IMR-90 (cell line): ENCODE measurements at regions of chr18 and their contacts with region 1.

Region 1: GRCh38 chr18:67670024-67670543 is 153.6 kb upstream of the DSEL start:
- DNase-seq: peak; percentile 98
- ATAC-seq: peak; percentile 87
- H3K4me3 ChIP-seq: no peak overlapping the region
- H3K27ac ChIP-seq: peak overlapping the region; percentile 100
- H3K4me1 ChIP-seq: peaks cover 12% of the 10 kb centered on the region
- H3K27me3 ChIP-seq: no peaks in the 10 kb centered on the region
- CTCF ChIP-seq: no peak
- POLR2A ChIP-seq: no peak
- RAD21 ChIP-seq: 0 out of 2 replicates have a peak, but pooled peaks have one; percentile 2

Region 2: DNA sequence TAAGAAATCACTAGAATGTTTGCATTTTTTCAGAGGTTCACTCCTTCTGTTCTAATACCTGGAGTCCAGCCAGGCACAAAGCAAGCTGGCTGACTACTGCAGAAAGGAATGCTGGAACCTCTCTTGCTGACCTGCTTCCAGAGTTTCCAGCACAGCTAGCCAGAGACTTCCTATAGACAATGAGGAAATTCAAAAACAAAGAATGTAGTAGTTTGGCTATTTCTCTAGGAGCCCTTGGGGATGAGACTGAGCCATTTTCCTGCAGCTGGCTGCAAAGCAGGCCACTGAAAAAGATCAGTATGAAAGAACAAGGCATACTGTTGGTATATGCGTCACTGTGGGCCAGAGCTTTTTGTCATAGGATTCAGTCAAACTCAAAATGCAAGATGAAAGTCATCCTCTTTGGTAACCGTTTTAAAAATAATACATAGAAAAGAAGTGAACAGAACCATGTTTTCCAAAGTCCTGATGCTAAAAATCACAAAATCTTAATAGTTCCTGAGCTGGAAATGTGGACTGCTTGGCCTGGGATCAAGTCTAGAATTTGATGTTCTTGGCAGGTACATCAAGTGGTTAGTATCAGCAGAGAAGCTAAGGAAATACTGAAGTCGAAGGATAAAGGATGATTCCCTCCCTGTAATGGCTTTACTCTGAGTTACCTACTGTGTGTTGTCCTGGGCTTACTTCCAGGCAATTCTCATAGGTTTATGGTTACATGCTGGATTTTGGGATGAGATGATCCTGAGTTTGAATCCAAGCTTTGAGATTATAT is 144.6 kb before region 1 on chr18:
- CTCF ChIA-PET with region 1: no interaction called
- POLR2A ChIA-PET with region 1: no interaction called
- dilution Hi-C with region 1: no loop called
- in situ Hi-C with region 1: no loop called
- intact Hi-C with region 1: loop called (anchors 2 kb)
- DNase-seq: peak; percentile 99
- ATAC-seq: peak; percentile 95
- H3K4me3 ChIP-seq: no peak overlapping the region
- H3K27ac ChIP-seq: peak overlapping the region; percentile 61; the same call in 1 of the 2 replicates
- H3K4me1 ChIP-seq: no peaks in the 10 kb centered on the region; the same call in 1 of the 2 replicates
- H3K27me3 ChIP-seq: no peaks in the 10 kb centered on the region
- CTCF ChIP-seq: no peak
- POLR2A ChIP-seq: no peak
- RAD21 ChIP-seq: 0 out of 2 replicates have a peak, but pooled peaks have one; percentile 9

Region 3: GRCh38 chr18:67590571-67591141 is 79.4 kb before region 1 on chr18:
- CTCF ChIA-PET with region 1: no interaction called
- POLR2A ChIA-PET with region 1: no interaction called
- dilution Hi-C with region 1: loop called (anchors 5 kb)
- in situ Hi-C with region 1: no loop called
- intact Hi-C with region 1: no loop called
- DNase-seq: peak; percentile 52
- ATAC-seq: peak; percentile 79
- H3K4me3 ChIP-seq: no peak overlapping the region
- H3K27ac ChIP-seq: no peak overlapping the region
- H3K4me1 ChIP-seq: no peaks in the 10 kb centered on the region
- H3K27me3 ChIP-seq: no peaks in the 10 kb centered on the region
- CTCF ChIP-seq: peak; percentile 34; the same call in 1 of the 2 replicates
- POLR2A ChIP-seq: no peak
- RAD21 ChIP-seq: peak; percentile 32; the same call in 1 of the 2 replicates

Region 4: GRCh38 chr18:67840379-67840778 is 170.3 kb after region 1 on chr18:
- CTCF ChIA-PET with region 1: no interaction called
- POLR2A ChIA-PET with region 1: no interaction called
- dilution Hi-C with region 1: no loop called
- in situ Hi-C with region 1: no loop called
- intact Hi-C with region 1: no loop called
- DNase-seq: no peak
- ATAC-seq: no peak
- H3K4me3 ChIP-seq: no peak overlapping the region
- H3K27ac ChIP-seq: no peak overlapping the region
- H3K4me1 ChIP-seq: no peaks in the 10 kb centered on the region
- H3K27me3 ChIP-seq: no peaks in the 10 kb centered on the region
- CTCF ChIP-seq: no peak
- POLR2A ChIP-seq: no peak
- RAD21 ChIP-seq: no peak

Region 5: GRCh38 chr18:67864677-67865340 is 194.7 kb after region 1 on chr18:
- CTCF ChIA-PET with region 1: no interaction called
- POLR2A ChIA-PET with region 1: no interaction called
- dilution Hi-C with region 1: no loop called
- in situ Hi-C with region 1: no loop called
- intact Hi-C with region 1: loop called (anchors 10 kb)
- DNase-seq: peak; percentile 58
- ATAC-seq: peak; percentile 41
- H3K4me3 ChIP-seq: no peak overlapping the region
- H3K27ac ChIP-seq: no peak overlapping the region
- H3K4me1 ChIP-seq: peaks cover 2% of the 10 kb centered on the region; the same call in 1 of the 2 replicates
- H3K27me3 ChIP-seq: no peaks in the 10 kb centered on the region
- CTCF ChIP-seq: no peak
- POLR2A ChIP-seq: no peak
- RAD21 ChIP-seq: no peak

Region 6: DNA sequence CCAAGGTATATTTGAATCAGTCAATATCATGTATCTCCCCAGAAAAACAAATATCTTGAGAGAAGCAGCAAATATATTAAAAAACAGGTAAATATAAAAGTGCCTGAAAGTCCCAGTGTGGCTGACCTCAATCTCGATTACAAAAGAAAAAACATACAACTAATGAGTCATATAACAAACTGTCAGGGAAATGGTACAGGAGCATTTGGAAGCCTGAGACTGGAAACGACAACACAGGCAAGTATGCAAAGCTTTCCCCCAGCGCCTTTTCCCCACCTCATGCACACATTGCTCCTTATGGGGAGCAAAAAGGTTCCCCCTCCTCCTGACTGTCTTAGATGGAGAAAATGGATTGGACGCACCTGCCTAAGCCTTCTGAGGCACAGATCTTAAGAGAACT is 814.2 kb after region 1 on chr18:
- CTCF ChIA-PET with region 1: no interaction called
- POLR2A ChIA-PET with region 1: no interaction called
- dilution Hi-C with region 1: no loop called
- in situ Hi-C with region 1: no loop called
- intact Hi-C with region 1: no loop called
- DNase-seq: peak; percentile 55
- ATAC-seq: peak; percentile 46
- H3K4me3 ChIP-seq: no peak overlapping the region
- H3K27ac ChIP-seq: no peak overlapping the region
- H3K4me1 ChIP-seq: peaks cover 4% of the 10 kb centered on the region; the same call in 1 of the 2 replicates
- H3K27me3 ChIP-seq: no peaks in the 10 kb centered on the region
- CTCF ChIP-seq: no peak
- POLR2A ChIP-seq: no peak
- RAD21 ChIP-seq: no peak